Posterior cingulate gyrus (tissue), 11 donors: ENCODE measurements at regions of chr12 and their contacts with region 1.

Region 1: GRCh38 chr12:58443273-58443980 is 476.9 kb downstream of the LRIG3 start:
- DNase-seq: no peak

Region 2: GRCh38 chr12:58359084-58359483 is 84.3 kb before region 1 on chr12:
- intact Hi-C with region 1: loop called (anchors 10 kb)
- DNase-seq: peak in 1 of 10 donors; percentile 67

Region 3: DNA sequence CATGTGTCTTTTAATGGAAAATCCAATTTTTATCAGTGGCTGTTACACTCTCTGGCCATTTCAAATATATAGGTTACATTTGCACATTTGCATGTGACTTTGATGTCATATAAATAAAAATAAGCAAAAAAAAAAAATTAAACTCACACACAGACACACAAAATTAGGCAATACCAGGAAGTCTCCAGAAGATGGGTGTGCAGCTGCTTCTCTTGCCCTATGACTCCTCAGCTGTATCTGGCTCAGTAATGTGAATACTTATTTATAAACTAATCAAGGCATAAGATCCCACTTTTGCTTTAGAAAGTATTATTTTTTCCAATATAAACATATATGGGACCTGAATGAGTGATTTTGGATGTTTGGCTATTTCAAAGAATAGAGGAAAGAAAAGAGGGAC is 15.8 kb after region 1 on chr12:
- intact Hi-C with region 1: loop called (anchors 1 kb)
- DNase-seq: no peak